AG04449 (cell line): ENCODE measurements at regions of chr10 and their contacts with region 1.

Region 1: DNA sequence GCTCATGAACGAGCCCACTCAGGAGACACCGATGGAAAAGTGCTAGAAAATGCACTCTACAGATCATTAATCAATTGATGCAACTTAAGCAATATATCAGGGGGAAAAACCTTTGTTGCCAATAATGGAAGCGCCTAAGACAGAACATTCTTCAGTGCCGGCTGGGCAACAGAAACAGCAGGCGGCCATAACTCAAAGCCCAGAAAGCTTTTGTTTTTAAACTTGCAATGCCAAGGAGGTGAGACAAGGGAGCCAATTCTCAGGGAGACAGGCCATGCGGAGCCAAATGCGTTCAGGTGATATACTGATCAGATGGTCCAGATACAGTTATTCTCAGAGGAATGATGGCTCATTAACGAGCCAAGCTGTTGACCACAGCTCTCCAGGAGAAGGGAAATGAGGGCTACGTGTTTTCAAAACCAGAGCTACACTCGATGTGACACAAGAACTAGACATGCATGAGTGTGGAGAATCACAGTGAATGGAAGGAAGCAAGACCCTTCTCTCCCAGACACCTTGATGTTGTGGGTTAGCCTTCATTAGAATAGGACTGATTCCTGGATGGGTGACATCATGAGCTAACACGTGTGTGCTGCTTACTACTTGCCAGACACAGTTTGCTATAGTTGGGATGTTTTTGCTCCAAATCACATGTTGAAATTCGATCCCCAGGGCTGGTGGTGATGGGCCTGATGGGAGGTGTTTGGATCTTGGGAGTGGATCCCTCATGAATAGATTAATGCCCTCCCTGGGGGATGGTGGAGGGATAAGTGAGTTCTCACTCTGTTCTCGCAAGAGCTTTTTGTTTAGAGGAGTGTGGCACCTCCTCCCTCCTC is 79.1 kb upstream of the KCNMA1 start:
- DNase-seq: no peak
- H3K4me3 ChIP-seq: no peak overlapping the region
- CTCF ChIP-seq: no peak

Region 2: GRCh38 chr10:77613476-77614130 is 103.1 kb before region 1 on chr10:
- CTCF ChIA-PET with region 1: no interaction called
- POLR2A ChIA-PET with region 1: no interaction called
- DNase-seq: no peak
- H3K4me3 ChIP-seq: no peak overlapping the region
- CTCF ChIP-seq: no peak

Region 3: DNA sequence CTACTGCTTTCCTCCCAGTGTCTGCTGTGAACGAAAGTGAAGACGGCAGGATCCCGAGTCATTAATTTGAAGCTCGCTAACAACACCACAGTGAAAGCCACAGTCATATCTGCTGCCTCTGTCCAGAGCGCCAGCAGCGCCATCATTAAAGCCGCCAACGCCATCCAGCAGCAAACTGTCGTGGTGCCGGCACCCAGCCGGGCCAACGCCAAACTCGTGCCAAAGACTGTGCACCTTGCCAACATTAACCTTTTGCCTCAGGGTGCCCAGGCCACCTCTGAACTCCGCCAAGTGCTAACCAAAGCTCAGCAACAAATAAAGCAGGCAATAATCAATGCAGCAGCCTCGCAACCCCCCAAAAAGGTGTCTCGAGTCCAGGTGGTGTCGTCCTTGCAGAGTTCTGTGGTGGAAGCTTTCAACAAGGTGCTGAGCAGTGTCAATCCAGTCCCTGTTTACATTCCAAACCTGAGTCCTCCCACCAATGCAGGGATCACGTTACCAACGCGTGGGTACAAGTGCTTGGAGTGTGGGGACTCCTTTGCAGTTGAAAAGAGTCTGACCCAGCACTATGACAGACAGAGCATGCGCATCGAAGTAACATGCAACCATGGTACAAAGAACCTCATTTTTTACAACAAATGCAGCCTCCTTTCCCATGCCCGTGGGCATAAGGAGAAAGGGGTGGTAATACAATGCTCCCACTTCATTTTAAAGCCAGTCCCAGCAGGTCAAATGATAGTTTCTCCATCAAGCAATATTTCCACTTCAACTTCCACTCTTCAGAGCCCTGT is 15.7 kb after region 1 on chr10:
- CTCF ChIA-PET with region 1: interaction called, 17 read pairs
- POLR2A ChIA-PET with region 1: interaction called, 3 read pairs
- DNase-seq: no peak
- H3K4me3 ChIP-seq: no peak overlapping the region
- CTCF ChIP-seq: no peak

Region 4: DNA sequence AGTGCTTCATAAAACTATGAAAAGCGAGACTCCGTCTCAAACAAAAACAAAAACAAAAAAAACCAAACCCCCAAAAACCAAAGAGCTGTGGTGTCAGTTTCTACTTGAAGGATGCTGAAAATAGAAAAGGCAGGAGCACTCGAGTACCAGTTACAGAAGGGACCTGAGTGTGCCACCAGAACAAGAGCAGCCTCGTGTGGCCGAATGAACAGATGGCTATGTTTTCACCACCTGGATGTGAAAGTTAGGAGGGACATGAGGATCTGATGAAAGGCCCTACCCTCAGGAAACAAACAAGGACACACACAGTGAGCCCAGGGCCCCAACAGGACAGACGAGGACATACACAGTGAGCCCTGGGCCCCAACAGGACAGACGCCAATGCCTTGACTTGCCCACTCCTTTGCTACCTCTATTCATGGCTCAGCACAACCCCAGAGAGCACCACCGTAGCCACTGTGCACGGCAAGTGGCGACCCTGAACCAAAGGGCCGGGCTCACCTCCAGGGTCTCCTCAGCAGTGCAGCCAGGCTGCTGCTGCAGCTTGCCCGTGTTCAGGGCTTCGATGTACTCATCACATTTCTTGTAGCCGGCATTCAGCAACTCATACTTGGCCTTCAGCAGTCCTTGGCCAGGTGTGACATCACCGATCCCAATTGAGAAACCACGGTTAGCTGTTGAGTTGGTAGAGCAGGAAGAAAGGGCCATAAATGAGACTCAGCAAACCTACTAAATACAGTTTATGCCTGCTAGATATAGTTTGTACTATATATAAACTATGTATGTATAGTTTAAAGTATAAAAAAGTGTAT is 287.7 kb after region 1 on chr10:
- CTCF ChIA-PET with region 1: no interaction called
- POLR2A ChIA-PET with region 1: no interaction called
- DNase-seq: no peak
- H3K4me3 ChIP-seq: no peak overlapping the region
- CTCF ChIP-seq: no peak

Region 5: DNA sequence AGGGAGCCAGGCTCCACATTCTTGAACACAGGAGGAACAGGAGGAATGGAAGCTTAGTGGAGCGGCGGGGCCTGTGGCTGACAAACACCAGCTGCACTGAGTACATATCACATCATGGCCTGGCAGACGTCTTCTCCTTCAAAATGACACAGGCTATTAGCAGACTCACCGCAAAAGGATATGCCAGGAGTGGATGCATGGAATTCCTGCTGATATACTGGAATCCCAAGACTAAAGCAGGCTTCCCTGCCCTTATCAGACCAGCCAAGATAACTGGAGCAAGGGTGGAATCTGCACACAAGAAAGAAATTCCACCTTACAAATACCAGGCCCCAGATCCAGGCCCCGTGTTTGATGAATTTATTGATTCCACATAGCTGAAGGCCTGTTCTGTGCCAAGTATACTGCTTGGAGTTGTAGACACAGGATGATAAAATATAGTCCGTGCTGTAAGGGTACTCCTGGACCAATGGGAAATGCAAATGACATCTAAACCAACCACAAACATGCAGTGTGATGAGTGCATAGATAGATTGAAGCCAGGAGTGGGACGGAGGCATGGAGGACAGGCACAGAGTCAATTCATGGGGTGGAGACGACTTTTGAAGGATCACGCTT is 871.6 kb after region 1 on chr10:
- CTCF ChIA-PET with region 1: no interaction called
- POLR2A ChIA-PET with region 1: no interaction called
- DNase-seq: peak; percentile 29
- H3K4me3 ChIP-seq: no peak overlapping the region
- CTCF ChIP-seq: no peak